Ascending aorta (tissue), 2 donors: ENCODE measurements at regions of chr22 and their contacts with region 1.

Region 1: DNA sequence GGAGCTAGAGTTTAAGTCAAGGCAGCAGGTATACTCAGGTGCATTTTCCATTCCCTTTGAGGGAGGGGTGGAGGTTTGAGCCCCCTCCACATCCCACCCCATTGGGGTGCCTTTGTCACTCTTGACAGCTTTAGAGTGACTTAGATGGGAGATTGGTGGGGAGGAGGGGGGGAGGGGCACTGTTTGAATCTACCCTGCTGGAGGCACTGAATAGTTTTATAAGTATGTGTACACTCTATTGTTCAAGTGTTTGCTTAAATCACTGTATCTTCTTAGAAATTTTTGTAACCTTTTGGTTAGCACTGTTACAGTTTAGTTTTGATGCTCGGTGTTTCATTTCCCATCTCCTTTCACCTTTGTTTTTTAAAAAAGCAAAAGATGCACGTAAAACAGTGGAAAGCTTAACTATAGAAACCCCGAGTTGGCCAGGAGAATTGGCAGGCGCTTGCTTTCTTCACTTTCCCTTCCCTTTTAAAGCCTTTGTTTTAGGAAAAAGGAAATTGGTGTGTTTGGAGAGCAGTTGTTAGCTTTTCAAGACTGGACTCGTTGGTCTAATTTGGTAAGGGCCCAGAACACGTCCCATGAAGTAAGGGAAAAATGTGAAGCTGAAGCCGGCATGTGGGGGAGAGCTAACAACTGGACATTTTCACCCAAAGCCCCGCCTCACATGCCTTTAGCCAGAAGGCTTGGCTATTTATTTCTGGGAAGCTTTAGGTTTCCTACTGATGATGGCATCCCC is 42.8 kb downstream of the TNRC6B start:
- DNase-seq: no peak
- H3K4me3 ChIP-seq: peak overlapping the region in 1 of 2 donors; percentile 37
- H3K27ac ChIP-seq: peak overlapping the region; percentile 83 to 88
- H3K4me1 ChIP-seq: peaks cover 11 to 29% of the 10 kb centered on the region in 2 donors
- H3K27me3 ChIP-seq: no peaks in the 10 kb centered on the region
- CTCF ChIP-seq: no peak

Region 2: GRCh38 chr22:40270748-40271373 is 50.4 kb after region 1 on chr22:
- intact Hi-C with region 1: loop called (anchors 5 kb)
- DNase-seq: no peak
- H3K4me3 ChIP-seq: no peak overlapping the region
- H3K27ac ChIP-seq: peak overlapping the region in 1 of 2 donors; percentile 34
- H3K4me1 ChIP-seq: peaks cover 3 to 7% of the 10 kb centered on the region in 2 donors
- H3K27me3 ChIP-seq: no peaks in the 10 kb centered on the region
- CTCF ChIP-seq: no peak